ENCODE measurements at regions of chr16 and their contacts with region 1.

Region 1: DNA sequence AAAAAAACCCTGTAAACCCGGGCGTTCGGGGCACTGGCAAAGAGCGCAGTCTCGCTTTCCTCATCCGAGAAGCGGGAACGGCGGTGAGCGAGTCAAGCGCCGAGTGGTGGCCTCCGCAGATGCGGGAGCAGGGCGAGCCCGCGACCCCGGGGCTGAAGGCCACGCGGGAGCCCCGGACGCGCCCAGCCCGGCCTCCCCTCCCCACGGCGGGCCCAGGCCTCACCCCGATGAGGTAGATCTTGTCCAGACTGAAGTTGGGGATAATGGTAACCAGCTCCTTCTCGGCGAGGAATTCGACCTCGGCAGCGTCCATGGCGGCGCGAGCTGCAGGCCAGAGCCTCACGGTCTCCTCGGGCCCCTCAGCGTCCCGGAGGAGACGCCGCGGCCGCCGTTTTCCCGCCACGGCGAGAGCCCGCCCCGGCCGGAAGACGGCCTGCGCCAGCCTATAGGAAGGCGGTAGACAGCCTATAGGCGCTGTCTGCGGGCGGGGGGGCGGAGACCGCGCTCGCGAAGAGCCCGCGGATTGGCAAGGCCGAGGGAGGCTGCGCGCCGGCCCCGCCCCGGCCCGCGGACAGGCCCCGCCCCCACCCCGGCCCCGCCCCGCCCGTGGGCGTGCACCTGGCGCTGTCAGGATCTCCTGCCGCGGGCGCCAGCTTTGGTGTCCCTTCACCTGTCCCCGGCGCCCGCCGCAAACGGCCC is at the start of gene GINS2:
- DNase-seq: peak; percentile 97
- H3K4me3 Mint-ChIP-seq: peak within 1 kb of the TSS; percentile 65
- H3K27ac Mint-ChIP-seq: no peak within 1 kb of the TSS
- H3K4me1 Mint-ChIP-seq: no peaks in the 10 kb centered on the region
- H3K27me3 Mint-ChIP-seq: peaks cover 32% of the 10 kb centered on the region
- CTCF ChIP-seq: no peak
- total RNA-seq, gene GINS2: 19.7 and 25.2 TPM in 2 replicates

Region 2: DNA sequence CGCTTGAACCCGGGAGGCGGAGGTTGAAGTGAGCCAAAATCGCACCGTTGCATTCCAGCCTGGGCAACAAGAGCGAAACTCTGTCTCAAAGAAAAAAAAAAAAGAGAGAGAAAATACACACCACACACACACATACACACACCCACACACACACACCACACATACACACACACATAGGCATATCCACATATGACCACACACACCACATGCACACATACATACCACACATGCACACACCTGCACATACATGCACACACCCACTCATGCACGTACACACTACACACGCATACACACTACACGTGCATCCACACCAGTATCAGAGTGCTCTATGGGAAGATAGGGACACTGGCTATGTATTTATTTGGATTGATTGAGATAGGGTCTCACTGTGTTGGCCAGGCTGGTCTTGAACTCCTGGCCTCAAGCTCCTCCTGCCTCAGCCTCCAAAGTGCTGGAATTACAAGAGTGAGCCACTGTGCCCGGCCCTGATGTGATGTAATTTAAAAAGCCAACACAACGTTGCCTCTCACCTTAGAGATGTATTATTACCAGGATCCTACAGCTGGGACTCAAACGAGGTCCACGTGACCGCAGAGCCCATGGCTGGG is 17.8 kb after region 1 on chr16:
- CTCF ChIA-PET with region 1: interaction called, 10 read pairs
- intact Hi-C with region 1: no loop called
- DNase-seq: no peak
- H3K4me3 Mint-ChIP-seq: no peak overlapping the region
- H3K27ac Mint-ChIP-seq: no peak overlapping the region
- H3K4me1 Mint-ChIP-seq: no peaks in the 10 kb centered on the region
- H3K27me3 Mint-ChIP-seq: no peaks in the 10 kb centered on the region
- CTCF ChIP-seq: no peak

Measured in Calu3 (cell line).